OCI-LY7 (cell line): ENCODE measurements at regions of chr7 and their contacts with region 1.

Region 1: GRCh38 chr7:12322284-12322902 is 81.3 kb downstream of the VWDE start:
- DNase-seq: peak; percentile 11
- H3K4me3 ChIP-seq: no peak overlapping the region
- H3K27ac ChIP-seq: no peak overlapping the region
- H3K4me1 ChIP-seq: no peaks in the 10 kb centered on the region
- CTCF ChIP-seq: peak; percentile 83

Region 2: DNA sequence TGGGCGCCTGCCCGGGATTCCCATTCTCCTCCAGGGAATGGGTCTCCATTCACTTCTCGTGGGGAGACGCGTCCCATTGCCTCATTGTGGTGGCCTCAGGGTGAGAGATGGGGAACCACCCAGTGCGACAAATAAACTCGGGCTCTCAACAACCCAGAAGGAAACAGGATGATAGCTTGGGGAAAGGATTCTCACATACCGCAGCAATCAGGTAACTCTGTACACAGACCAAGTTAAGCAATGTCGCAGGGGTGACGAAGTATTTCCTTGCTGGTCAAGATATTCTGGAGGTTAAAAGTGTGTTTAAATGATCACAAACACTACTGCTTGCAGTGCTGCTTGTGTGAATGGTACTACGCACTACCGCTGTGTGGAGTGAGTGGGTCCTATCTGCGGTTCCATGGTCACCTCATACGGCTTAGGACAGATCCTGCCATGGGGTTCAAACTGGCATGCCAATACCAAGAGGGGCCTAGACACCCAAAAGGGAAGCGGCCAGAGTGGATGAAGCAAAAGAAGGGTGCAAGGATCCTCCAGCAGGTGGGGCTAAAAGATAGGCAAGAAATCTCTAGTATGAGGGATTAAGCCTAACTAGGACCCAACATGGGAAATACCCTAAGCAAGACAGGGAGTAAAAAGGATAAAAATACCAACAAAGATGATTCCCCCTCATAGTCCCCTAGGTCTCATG is 255.1 kb before region 1 on chr7:
- CTCF ChIA-PET with region 1: no interaction called
- POLR2A ChIA-PET with region 1: no interaction called
- intact Hi-C with region 1: loop called (anchors 1 kb)
- DNase-seq: peak; percentile 23
- H3K4me3 ChIP-seq: no peak overlapping the region
- H3K27ac ChIP-seq: no peak overlapping the region
- H3K4me1 ChIP-seq: no peaks in the 10 kb centered on the region
- CTCF ChIP-seq: peak; percentile 68